Aorta (tissue), 5 donors: ENCODE measurements at regions of chr17 and their contacts with region 1.

Region 1: GRCh38 chr17:38464723-38465390 is 36.6 kb downstream of the ARHGAP23 start:
- DNase-seq: peak; percentile 93 to 96
- ATAC-seq: peak; percentile 93
- H3K4me3 ChIP-seq: peak overlapping the region in 1 of 2 donors; percentile 56
- H3K27ac ChIP-seq: peak overlapping the region; percentile 91 to 99
- H3K4me1 ChIP-seq: peaks cover 0 to 2% of the 10 kb centered on the region in 2 donors
- H3K27me3 ChIP-seq: no peaks in the 10 kb centered on the region

Region 2: GRCh38 chr17:38358586-38359513 is 106.0 kb before region 1 on chr17:
- intact Hi-C with region 1: no loop called
- DNase-seq: no peak
- ATAC-seq: no peak
- H3K4me3 ChIP-seq: no peak overlapping the region
- H3K27ac ChIP-seq: peak overlapping the region in 1 of 2 donors; percentile 68
- H3K4me1 ChIP-seq: peaks cover 5 to 12% of the 10 kb centered on the region in 2 donors
- H3K27me3 ChIP-seq: no peaks in the 10 kb centered on the region

Region 3: GRCh38 chr17:38428112-38428642 is 36.7 kb before region 1 on chr17 and contains the start of gene ARHGAP23:
- intact Hi-C with region 1: loop called in 1 of 2 experiments (anchors 2 kb)
- DNase-seq: peak; percentile 83 to 89
- ATAC-seq: peak; percentile 66
- H3K4me3 ChIP-seq: peak within 1 kb of the TSS; percentile 57 to 97
- H3K27ac ChIP-seq: peak within 1 kb of the TSS; percentile 23 to 94
- H3K4me1 ChIP-seq: peaks cover 2% of the 10 kb centered on the region in 2 donors
- H3K27me3 ChIP-seq: no peaks in the 10 kb centered on the region
- total RNA-seq, gene ARHGAP23: 110 to 126 TPM

Region 4: DNA sequence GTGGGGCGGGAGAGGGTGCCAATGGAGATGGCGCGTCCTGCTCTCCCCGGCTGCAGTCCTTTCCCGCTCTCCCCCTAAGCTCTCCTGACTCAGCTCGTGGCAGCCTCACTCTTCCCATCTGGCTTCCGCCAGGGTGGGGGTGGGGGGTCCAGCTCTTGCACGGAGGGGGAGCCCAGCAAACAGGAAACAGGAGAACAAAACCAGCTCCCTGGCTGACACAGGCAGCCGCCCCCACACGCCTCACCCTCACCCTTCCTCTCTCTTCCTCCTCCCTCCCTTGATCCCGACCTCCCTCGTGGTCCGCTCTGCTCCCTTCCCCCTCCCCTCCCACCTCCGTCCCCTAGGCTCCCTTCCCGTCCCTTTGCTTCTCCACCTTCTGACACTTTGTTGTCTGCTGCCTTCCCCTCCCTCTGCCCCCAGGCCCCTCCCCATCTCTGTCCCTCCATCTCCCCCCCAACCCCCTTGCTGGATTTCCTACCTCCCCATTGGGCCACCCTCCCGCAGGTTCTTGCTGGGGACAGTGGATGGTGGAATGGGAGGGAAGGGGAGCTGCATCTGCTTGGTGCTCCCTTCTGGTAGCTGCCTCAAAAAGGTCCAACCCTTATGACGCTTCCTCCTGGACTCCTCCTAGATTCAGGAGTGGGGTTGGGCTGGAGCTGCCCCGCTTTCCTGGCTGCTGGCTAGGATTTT is 12.9 kb before region 1 on chr17:
- intact Hi-C with region 1: loop called in 1 of 2 experiments (anchors 2 kb)
- DNase-seq: no peak
- ATAC-seq: peak; percentile 1
- H3K4me3 ChIP-seq: no peak overlapping the region
- H3K27ac ChIP-seq: peak overlapping the region in 1 of 2 donors; percentile 60
- H3K4me1 ChIP-seq: peaks cover 0 to 4% of the 10 kb centered on the region in 2 donors
- H3K27me3 ChIP-seq: no peaks in the 10 kb centered on the region

Region 5: DNA sequence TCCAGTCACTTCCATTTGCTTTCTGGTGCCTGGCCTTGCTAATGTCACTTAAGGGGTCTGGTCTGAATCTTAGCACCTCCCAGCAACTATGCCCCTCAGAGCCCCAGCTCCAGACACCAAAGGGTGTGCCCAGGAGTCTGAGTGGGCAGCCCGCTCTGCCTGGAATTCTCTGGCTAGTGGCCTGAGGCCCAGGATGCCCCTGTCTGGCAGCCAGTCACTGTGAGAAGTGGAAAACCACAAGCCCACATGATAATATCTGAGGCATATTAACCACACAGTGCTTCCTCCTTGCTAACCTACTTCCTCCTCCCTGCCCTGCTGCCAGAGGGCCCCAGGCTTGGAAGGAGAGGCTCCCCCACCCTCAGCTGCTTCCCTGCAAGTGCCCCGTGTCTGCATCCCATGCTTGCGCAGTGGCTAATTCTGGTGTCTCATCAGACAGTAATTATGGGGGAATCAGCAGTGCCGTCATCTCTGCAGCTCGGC is 126.9 kb after region 1 on chr17:
- intact Hi-C with region 1: no loop called
- DNase-seq: no peak
- ATAC-seq: no peak
- H3K4me3 ChIP-seq: no peak overlapping the region
- H3K27ac ChIP-seq: no peak overlapping the region
- H3K4me1 ChIP-seq: no peaks in the 10 kb centered on the region
- H3K27me3 ChIP-seq: no peaks in the 10 kb centered on the region